B cell (primary cell): ENCODE measurements at regions of chr1 and their contacts with region 1.

Region 1: GRCh38 chr1:235802947-235803346 is 63.8 kb downstream of the LYST start:
- DNase-seq: no peak
- ATAC-seq: no peak
- H3K4me3 ChIP-seq: no peak overlapping the region
- H3K4me3 Mint-ChIP-seq: no peak overlapping the region
- H3K27ac ChIP-seq: no peak overlapping the region
- H3K27ac Mint-ChIP-seq: no peak overlapping the region
- H3K4me1 ChIP-seq: no peaks in the 10 kb centered on the region
- H3K4me1 Mint-ChIP-seq: no peaks in the 10 kb centered on the region
- H3K27me3 ChIP-seq: no peaks in the 10 kb centered on the region
- H3K27me3 Mint-ChIP-seq: no peaks in the 10 kb centered on the region
- CTCF ChIP-seq: no peak

Region 2: GRCh38 chr1:235181561-235182245 is 621.2 kb before region 1 on chr1:
- CTCF ChIA-PET with region 1: no interaction called
- POLR2A ChIA-PET with region 1: interaction called, 10 read pairs
- intact Hi-C with region 1: no loop called
- DNase-seq: no peak
- ATAC-seq: no peak
- H3K4me3 ChIP-seq: no peak overlapping the region
- H3K4me3 Mint-ChIP-seq: no peak overlapping the region
- H3K27ac ChIP-seq: no peak overlapping the region
- H3K27ac Mint-ChIP-seq: no peak overlapping the region
- H3K4me1 ChIP-seq: no peaks in the 10 kb centered on the region
- H3K4me1 Mint-ChIP-seq: no peaks in the 10 kb centered on the region
- H3K27me3 ChIP-seq: no peaks in the 10 kb centered on the region
- H3K27me3 Mint-ChIP-seq: no peaks in the 10 kb centered on the region
- CTCF ChIP-seq: no peak

Region 3: GRCh38 chr1:235902638-235903542 is 99.9 kb after region 1 on chr1:
- CTCF ChIA-PET with region 1: no interaction called
- POLR2A ChIA-PET with region 1: no interaction called
- intact Hi-C with region 1: no loop called
- DNase-seq: no peak
- ATAC-seq: no peak
- H3K4me3 ChIP-seq: no peak overlapping the region
- H3K4me3 Mint-ChIP-seq: no peak overlapping the region
- H3K27ac ChIP-seq: no peak overlapping the region
- H3K27ac Mint-ChIP-seq: no peak overlapping the region
- H3K4me1 ChIP-seq: peaks cover 6 to 11% of the 10 kb centered on the region in 2 donors
- H3K4me1 Mint-ChIP-seq: peaks cover 24% of the 10 kb centered on the region
- H3K27me3 ChIP-seq: no peaks in the 10 kb centered on the region
- H3K27me3 Mint-ChIP-seq: no peaks in the 10 kb centered on the region
- CTCF ChIP-seq: no peak